Naive thymus-derived CD4-positive, alpha-beta T cell (primary cell): ENCODE measurements at regions of chr11 and their contacts with region 1.

Region 1: GRCh38 chr11:95688580-95689189 is 100.9 kb downstream of the FAM76B start:
- DNase-seq: peak in 7 of 9 donors; percentile 48 to 84 (median 70)
- ATAC-seq: peak; percentile 79
- H3K4me3 ChIP-seq: no peak overlapping the region
- H3K4me3 Mint-ChIP-seq: no peak overlapping the region
- H3K27ac ChIP-seq: peak overlapping the region; percentile 73
- H3K27ac Mint-ChIP-seq: no peak overlapping the region
- H3K4me1 ChIP-seq: peaks cover 25 to 68% of the 10 kb centered on the region in 2 donors
- H3K4me1 Mint-ChIP-seq: peaks cover 8 to 44% (median 35%) of the 10 kb centered on the region in 7 donors
- H3K27me3 ChIP-seq: no peaks in the 10 kb centered on the region
- H3K27me3 Mint-ChIP-seq: no peaks in the 10 kb centered on the region

Region 2: DNA sequence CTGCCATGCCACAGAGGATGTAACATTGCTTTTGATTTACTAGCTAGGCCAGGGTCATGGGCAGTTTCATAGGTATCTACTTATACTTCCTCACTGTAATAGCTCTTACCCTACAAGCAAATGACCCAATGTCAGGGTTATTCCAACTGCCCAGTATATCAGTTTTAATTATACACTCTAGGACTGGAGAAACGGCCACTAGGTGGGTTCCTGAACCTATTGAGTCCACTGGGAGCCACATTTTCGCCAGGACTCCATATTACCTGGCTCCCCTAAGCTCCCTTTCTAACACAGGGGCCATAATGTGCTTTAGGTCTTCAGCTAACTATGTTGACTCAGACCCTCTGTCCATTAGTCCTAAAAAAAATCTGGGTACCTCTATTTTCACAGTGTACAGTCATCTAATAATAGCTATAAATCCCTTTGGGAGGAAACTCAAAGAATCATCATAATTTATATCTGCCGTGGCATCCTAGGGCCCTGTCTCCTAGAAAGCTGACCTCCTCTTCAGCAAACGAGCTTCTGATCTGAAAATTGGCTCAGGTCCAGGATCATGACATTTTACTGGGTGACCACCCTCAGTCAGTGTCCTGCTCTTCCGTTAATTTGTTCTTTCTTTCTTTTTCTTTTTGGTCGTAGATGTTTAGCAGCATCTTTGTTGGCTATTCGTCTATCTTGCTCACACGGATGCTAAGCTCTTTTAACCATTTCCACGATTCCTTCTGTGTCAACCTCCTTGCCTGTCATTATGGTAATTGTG is 143.4 kb before region 1 on chr11:
- CTCF ChIA-PET with region 1: no interaction called
- POLR2A ChIA-PET with region 1: no interaction called
- intact Hi-C with region 1: loop called in 1 of 2 experiments (anchors 5 kb)
- DNase-seq: no peak
- ATAC-seq: no peak
- H3K4me3 ChIP-seq: no peak overlapping the region
- H3K4me3 Mint-ChIP-seq: no peak overlapping the region
- H3K27ac ChIP-seq: no peak overlapping the region
- H3K27ac Mint-ChIP-seq: no peak overlapping the region
- H3K4me1 ChIP-seq: peaks cover 0 to 33% of the 10 kb centered on the region in 2 donors
- H3K4me1 Mint-ChIP-seq: peaks cover 14 to 49% (median 45%) of the 10 kb centered on the region in 7 donors
- H3K27me3 ChIP-seq: no peaks in the 10 kb centered on the region
- H3K27me3 Mint-ChIP-seq: no peaks in the 10 kb centered on the region

Region 3: GRCh38 chr11:95556342-95557163 is 132.1 kb before region 1 on chr11:
- CTCF ChIA-PET with region 1: no interaction called
- POLR2A ChIA-PET with region 1: no interaction called
- intact Hi-C with region 1: loop called in 1 of 2 experiments (anchors 5 kb)
- DNase-seq: peak in 1 of 9 donors; percentile 38
- ATAC-seq: no peak
- H3K4me3 ChIP-seq: no peak overlapping the region
- H3K4me3 Mint-ChIP-seq: peak overlapping the region in 1 of 10 donors; percentile 58
- H3K27ac ChIP-seq: no peak overlapping the region
- H3K27ac Mint-ChIP-seq: peak overlapping the region in 3 of 9 donors; percentile 7 to 75 (median 12)
- H3K4me1 ChIP-seq: no peaks in the 10 kb centered on the region
- H3K4me1 Mint-ChIP-seq: peaks cover 0 to 38% (median 12%) of the 10 kb centered on the region in 7 donors
- H3K27me3 ChIP-seq: no peaks in the 10 kb centered on the region
- H3K27me3 Mint-ChIP-seq: peaks cover 0 to 4% (median 0%) of the 10 kb centered on the region in 5 donors

Region 4: GRCh38 chr11:95641495-95641894 is 47.2 kb before region 1 on chr11:
- CTCF ChIA-PET with region 1: interaction called, 3 read pairs
- POLR2A ChIA-PET with region 1: no interaction called
- intact Hi-C with region 1: loop called (anchors 1 to 2 kb)
- DNase-seq: peak in 8 of 9 donors; percentile 31 to 73 (median 58)
- ATAC-seq: peak; percentile 85
- H3K4me3 ChIP-seq: no peak overlapping the region
- H3K4me3 Mint-ChIP-seq: peak overlapping the region in 9 of 10 donors; percentile 30 to 76 (median 71)
- H3K27ac ChIP-seq: peak overlapping the region; percentile 54
- H3K27ac Mint-ChIP-seq: peak overlapping the region; percentile 83 to 97 (median 92)
- H3K4me1 ChIP-seq: peaks cover 0 to 21% of the 10 kb centered on the region in 2 donors
- H3K4me1 Mint-ChIP-seq: peaks cover 12 to 29% (median 21%) of the 10 kb centered on the region in 7 donors
- H3K27me3 ChIP-seq: no peaks in the 10 kb centered on the region
- H3K27me3 Mint-ChIP-seq: no peaks in the 10 kb centered on the region

Region 5: DNA sequence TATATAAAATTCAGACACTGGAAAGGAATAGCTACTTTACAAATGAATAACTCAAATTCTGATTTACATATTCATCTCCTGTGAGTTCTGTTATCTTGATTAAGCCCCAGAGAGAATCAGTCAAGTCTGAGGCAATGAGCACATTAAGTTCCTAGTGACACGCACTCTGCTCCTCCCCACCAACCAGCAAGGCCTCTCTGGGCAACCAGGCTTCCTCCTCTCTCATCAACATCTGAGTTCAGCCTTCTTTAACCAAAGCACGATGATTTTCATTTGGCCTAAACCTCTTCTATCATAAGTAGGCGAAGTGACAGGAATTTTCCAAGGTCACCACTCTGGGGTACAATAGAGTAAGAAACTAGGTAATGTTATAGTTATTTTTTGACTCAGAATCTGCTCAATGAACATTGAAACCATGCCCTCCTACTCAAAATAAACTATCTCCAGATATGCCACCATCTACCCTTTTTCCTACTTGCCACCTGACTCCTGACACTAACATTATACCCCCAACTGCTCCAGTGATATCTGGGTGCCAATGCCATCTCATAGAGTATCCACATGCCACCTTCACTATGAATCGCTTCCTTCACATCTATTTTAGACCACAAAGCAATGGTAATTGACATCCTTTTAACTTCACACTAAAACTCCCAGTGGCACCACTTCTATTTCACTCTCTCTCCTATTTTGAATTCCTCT is 13.9 kb before region 1 on chr11:
- CTCF ChIA-PET with region 1: interaction called, 4 read pairs
- POLR2A ChIA-PET with region 1: interaction called, 27 read pairs
- intact Hi-C with region 1: loop called in 1 of 2 experiments (anchors 1 kb)
- DNase-seq: peak in 4 of 9 donors; percentile 13 to 25 (median 18)
- ATAC-seq: peak; percentile 66
- H3K4me3 ChIP-seq: no peak overlapping the region
- H3K4me3 Mint-ChIP-seq: peak overlapping the region in 5 of 10 donors; percentile 1 to 37 (median 10)
- H3K27ac ChIP-seq: no peak overlapping the region
- H3K27ac Mint-ChIP-seq: peak overlapping the region in 7 of 9 donors; percentile 1 to 69 (median 47)
- H3K4me1 ChIP-seq: peaks cover 0 to 22% of the 10 kb centered on the region in 2 donors
- H3K4me1 Mint-ChIP-seq: peaks cover 15 to 65% (median 36%) of the 10 kb centered on the region in 7 donors
- H3K27me3 ChIP-seq: no peaks in the 10 kb centered on the region
- H3K27me3 Mint-ChIP-seq: no peaks in the 10 kb centered on the region